ENCODE measurements at regions of chr15 and their contacts with region 1.

Region 1: DNA sequence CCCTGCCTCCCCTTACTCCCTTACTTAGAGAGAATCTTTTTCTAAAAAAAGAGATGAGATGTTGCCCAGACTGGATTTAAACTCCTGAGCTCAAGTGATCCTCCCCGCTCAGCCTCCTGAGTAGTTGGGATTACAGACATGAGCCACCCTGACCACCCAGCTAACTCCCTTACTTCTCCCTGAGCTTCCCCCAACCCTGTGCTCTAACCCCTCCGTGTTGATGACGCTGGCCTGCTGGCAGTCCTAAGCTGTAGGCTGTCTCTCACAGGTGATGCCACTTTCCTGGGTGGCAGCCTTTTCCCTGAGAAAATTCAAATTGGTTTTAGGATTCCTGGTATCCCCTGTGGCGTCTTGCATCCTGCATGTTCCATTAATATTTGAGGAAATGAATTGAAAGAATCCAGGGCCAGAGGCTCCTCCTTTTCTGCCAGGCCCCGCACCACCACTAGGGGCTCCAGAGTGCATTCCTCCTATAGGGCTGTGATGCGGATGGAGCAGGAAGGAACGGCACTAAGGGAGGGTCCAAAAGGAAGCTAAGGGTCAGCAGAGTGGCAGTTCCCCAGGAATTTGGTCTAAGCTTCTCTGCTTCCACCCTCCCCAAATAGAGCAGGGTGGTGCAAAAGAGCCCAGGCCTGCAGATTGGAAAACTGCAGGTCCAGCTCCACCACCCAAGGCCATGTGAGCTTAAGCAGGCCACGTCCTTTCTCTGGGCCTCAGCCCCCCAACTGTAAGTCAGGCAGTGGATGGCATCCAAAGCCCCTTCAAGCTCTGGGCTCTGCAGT is 101.1 kb downstream of the DAPK2 start:
- DNase-seq: peak; percentile 77 to 82
- ATAC-seq: peak; percentile 66 to 84 (median 78)
- H3K4me3 ChIP-seq: no peak overlapping the region
- H3K27ac ChIP-seq: peak overlapping the region in 8 of 10 donors; percentile 1 to 63 (median 43)
- H3K4me1 ChIP-seq: peaks cover 10 to 39% (median 29%) of the 10 kb centered on the region in 9 donors
- H3K27me3 ChIP-seq: no peaks in the 10 kb centered on the region
- CTCF ChIP-seq: peak; percentile 74 to 94 (median 90)

Region 2: DNA sequence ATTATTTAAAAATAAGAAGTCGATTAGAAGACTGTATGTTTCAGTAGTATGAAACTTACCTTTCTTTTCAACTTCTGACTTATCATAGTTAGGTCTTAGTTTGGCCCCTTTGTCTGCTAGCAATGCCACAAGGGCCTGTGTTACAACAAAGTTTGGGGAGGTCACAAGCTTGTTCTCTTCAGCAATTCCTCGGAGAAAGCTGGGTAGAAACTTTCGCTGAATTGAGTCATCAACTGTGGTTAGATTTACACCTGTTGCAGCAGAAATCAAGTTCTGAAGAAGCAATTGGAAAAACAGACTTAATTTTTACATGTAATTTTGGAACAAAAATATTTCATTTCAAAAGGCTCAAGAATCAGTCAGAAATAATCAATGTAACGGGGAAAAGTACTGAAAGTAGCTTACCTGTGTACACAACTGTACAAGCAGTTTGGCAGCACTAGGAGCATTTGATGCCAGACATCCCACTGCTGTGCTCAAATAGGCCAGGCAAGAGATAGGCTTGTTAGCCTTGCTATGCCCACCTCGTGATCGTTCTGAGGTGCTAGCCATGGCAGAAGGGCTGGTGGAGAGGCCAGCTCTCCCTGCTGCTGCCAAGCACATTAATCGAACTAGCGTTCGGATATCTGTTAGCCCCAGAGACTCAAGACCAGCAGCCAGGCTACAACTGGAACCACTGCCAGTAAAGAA is 289.4 kb before region 1 on chr15:
- intact Hi-C with region 1: no loop called
- DNase-seq: peak in 1 of 2 donors; percentile 11
- ATAC-seq: peak in 5 of 8 donors; percentile 62 to 88 (median 83)
- H3K4me3 ChIP-seq: no peak overlapping the region
- H3K27ac ChIP-seq: no peak overlapping the region
- H3K4me1 ChIP-seq: no peaks in the 10 kb centered on the region
- H3K27me3 ChIP-seq: no peaks in the 10 kb centered on the region
- CTCF ChIP-seq: no peak

Region 3: DNA sequence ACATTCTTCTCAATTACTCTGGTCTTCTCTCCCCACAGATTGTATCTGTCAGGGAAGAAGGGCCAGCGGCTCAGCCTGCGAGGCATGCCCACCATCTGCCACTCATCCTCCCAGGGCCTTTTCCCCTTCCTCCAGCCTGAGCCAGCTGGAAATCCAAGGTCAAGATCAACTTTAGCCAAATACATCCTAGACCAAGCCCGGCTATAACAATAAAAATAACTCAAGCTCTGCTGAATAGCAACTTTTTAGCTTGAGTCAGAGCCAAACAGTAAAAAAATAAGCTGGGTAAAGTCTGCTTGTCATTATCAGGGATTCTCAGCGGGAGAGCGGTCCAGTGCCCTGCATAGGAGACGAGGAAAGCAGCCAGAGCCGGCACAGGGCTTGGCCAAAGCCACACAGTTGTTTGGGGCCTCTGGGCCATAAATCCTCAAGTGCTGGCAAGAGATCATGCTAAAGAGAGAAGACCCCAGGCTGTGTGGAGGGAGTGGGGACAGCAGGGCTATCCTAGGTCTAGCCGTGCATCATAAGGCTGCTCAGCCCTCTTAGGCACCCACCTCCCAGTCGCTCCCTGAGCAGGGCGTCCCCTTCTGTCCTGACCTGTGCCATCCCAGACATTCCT is 35.3 kb before region 1 on chr15:
- intact Hi-C with region 1: loop called in 1 of 10 experiments (anchors 2 kb)
- DNase-seq: no peak
- ATAC-seq: peak; percentile 15 to 45 (median 25)
- H3K4me3 ChIP-seq: no peak overlapping the region
- H3K27ac ChIP-seq: peak overlapping the region in 8 of 10 donors; percentile 11 to 73 (median 59)
- H3K4me1 ChIP-seq: peaks cover 3 to 47% (median 27%) of the 10 kb centered on the region in 9 donors
- H3K27me3 ChIP-seq: no peaks in the 10 kb centered on the region
- CTCF ChIP-seq: no peak

Region 4: GRCh38 chr15:63986751-63987341 is 41.6 kb after region 1 on chr15:
- intact Hi-C with region 1: loop called in 1 of 10 experiments (anchors 5 kb)
- DNase-seq: no peak
- ATAC-seq: no peak
- H3K4me3 ChIP-seq: no peak overlapping the region
- H3K27ac ChIP-seq: peak overlapping the region; percentile 76 to 91 (median 88)
- H3K4me1 ChIP-seq: peaks cover 43 to 88% (median 79%) of the 10 kb centered on the region in 9 donors
- H3K27me3 ChIP-seq: no peaks in the 10 kb centered on the region
- CTCF ChIP-seq: no peak

Measured in heart right ventricle (tissue), 16 donors.